ENCODE measurements at regions of chr1 and their contacts with region 1.

Region 1: DNA sequence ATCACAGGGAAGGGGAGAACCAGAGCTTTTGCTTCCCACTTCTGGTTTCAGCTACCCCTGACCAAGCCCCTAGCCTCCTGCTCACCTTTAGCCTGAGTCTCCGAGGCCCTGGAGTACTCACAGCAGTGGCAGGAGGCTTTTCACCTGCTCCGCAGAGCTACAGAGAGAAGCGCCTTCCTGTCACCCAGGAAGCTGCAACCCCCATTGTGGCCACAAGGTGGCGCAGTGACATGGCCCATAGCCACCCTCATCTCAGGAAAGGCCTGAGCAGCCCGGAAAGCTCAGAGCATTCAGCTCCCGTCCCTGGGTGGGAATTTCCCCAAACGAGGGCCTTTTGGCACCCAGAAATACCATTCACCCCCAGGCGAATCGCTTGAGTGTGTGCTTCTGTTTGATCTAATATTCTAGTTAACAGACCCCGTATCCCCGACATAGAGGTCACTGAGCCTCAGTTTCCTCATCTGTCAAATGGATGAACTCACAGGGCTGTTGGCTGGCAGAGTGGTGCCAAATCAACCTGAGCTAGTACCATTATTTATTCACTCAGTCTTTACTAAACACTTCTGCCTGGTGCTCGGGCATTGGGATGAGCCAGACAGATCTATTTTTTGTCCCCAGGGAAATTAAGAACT is 25.3 kb downstream of the A3GALT2 start:
- DNase-seq: peak; percentile 47
- ATAC-seq: peak; percentile 86
- H3K4me3 ChIP-seq: no peak overlapping the region
- H3K27ac ChIP-seq: no peak overlapping the region
- H3K4me1 ChIP-seq: peaks cover 0 to 8% of the 10 kb centered on the region in 2 experiments; a peak in 2 of 4 replicates
- H3K27me3 ChIP-seq: no peaks in the 10 kb centered on the region
- CTCF ChIP-seq: peak; percentile 89 to 97 (median 95)
- POLR2A ChIP-seq: no peak
- RAD21 ChIP-seq: peak; percentile 90

Region 2: GRCh38 chr1:33111970-33112369 is 183.6 kb before region 1 on chr1:
- CTCF ChIA-PET with region 1: interaction called, 4 read pairs
- POLR2A ChIA-PET with region 1: no interaction called
- RAD21 ChIA-PET with region 1: no interaction called
- intact Hi-C with region 1: loop called (anchors 5 kb)
- DNase-seq: no peak
- ATAC-seq: peak; percentile 69
- H3K4me3 ChIP-seq: no peak overlapping the region
- H3K27ac ChIP-seq: no peak overlapping the region
- H3K4me1 ChIP-seq: no peaks in the 10 kb centered on the region
- H3K27me3 ChIP-seq: no peaks in the 10 kb centered on the region
- CTCF ChIP-seq: peak; percentile 28 to 47 (median 35); a peak in 4 of 6 replicates
- POLR2A ChIP-seq: no peak
- RAD21 ChIP-seq: peak; percentile 68

Region 3: GRCh38 chr1:33219881-33220661 is 75.5 kb before region 1 on chr1:
- CTCF ChIA-PET with region 1: interaction called, 9 read pairs
- POLR2A ChIA-PET with region 1: no interaction called
- RAD21 ChIA-PET with region 1: interaction called in 1 of 2 experiments, 7 read pairs
- intact Hi-C with region 1: loop called (anchors 1 kb)
- DNase-seq: peak; percentile 60
- ATAC-seq: peak; percentile 69
- H3K4me3 ChIP-seq: peak overlapping the region in 1 of 2 experiments; percentile 42; a peak in 2 of 4 replicates
- H3K27ac ChIP-seq: peak overlapping the region; percentile 82
- H3K4me1 ChIP-seq: peaks cover 30 to 41% of the 10 kb centered on the region in 2 experiments
- H3K27me3 ChIP-seq: no peaks in the 10 kb centered on the region
- CTCF ChIP-seq: no peak
- POLR2A ChIP-seq: no peak
- RAD21 ChIP-seq: peak; percentile 33; the same call in 1 of the 2 replicates

Region 4: GRCh38 chr1:33430692-33431593 is 135.4 kb after region 1 on chr1 and contains the start of gene PHC2:
- CTCF ChIA-PET with region 1: interaction called, 10 read pairs
- POLR2A ChIA-PET with region 1: no interaction called
- RAD21 ChIA-PET with region 1: no interaction called
- intact Hi-C with region 1: no loop called
- DNase-seq: peak; percentile 95
- ATAC-seq: peak; percentile 85
- H3K4me3 ChIP-seq: peak within 1 kb of the TSS; percentile 76 to 92
- H3K27ac ChIP-seq: peak within 1 kb of the TSS; percentile 84
- H3K4me1 ChIP-seq: peaks cover 68 to 86% of the 10 kb centered on the region in 2 experiments
- H3K27me3 ChIP-seq: no peaks in the 10 kb centered on the region
- CTCF ChIP-seq: peak in 1 of 3 experiments; percentile 24; a peak in 1 of 6 replicates
- POLR2A ChIP-seq: no peak
- RAD21 ChIP-seq: no peak
- total RNA-seq, gene PHC2: 176 TPM

Region 5: DNA sequence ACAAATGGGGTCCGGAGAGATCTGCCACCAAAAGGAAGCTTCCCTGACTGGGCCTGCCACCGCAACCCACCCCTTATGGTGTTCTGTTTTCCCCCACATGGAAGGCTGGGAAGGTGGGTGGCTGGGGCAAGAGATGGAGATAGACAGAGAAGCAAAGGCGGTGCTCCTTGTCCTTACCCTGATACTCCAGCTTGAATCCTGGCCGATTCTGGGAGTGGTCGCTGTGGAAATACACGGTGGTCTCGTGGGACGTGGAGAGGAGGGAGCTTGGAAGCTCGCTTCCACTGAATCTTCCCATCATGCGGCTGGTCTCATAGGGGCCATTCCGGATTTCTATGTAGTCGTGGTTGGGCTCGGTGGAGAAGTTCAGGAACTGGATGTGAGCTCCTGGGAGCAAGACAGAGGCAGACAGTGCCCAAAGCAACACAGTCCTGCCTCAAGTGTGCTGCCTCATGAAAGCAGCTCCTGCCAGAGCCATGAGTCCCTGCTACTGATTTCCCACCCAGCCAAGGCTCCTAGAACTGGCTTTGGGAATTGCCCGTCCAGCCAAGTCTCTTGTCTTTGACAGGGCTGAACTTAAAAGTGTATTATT is 315.4 kb after region 1 on chr1:
- CTCF ChIA-PET with region 1: interaction called, 37 read pairs
- POLR2A ChIA-PET with region 1: no interaction called
- RAD21 ChIA-PET with region 1: interaction called in 1 of 2 experiments, 3 read pairs
- intact Hi-C with region 1: loop called (anchors 1 kb)
- DNase-seq: no peak
- ATAC-seq: no peak
- H3K4me3 ChIP-seq: no peak overlapping the region
- H3K27ac ChIP-seq: no peak overlapping the region
- H3K4me1 ChIP-seq: peaks cover 0 to 5% of the 10 kb centered on the region in 2 experiments; a peak in 1 of 4 replicates
- H3K27me3 ChIP-seq: peaks cover 4% of the 10 kb centered on the region; the same call in 1 of the 2 replicates
- CTCF ChIP-seq: no peak
- POLR2A ChIP-seq: no peak
- RAD21 ChIP-seq: no peak

Region 6: GRCh38 chr1:33616773-33617172 is 321.2 kb after region 1 on chr1:
- CTCF ChIA-PET with region 1: interaction called, 37 read pairs
- POLR2A ChIA-PET with region 1: no interaction called
- RAD21 ChIA-PET with region 1: interaction called in 1 of 2 experiments, 3 read pairs
- intact Hi-C with region 1: loop called (anchors 1 kb)
- DNase-seq: no peak
- ATAC-seq: no peak
- H3K4me3 ChIP-seq: no peak overlapping the region
- H3K27ac ChIP-seq: no peak overlapping the region
- H3K4me1 ChIP-seq: peaks cover 0 to 5% of the 10 kb centered on the region in 2 experiments; a peak in 1 of 4 replicates
- H3K27me3 ChIP-seq: peaks cover 4% of the 10 kb centered on the region; the same call in 1 of the 2 replicates
- CTCF ChIP-seq: no peak
- POLR2A ChIP-seq: no peak
- RAD21 ChIP-seq: no peak

Measured in HCT116 (cell line).